ENCODE measurements at regions of chr11 and their contacts with region 1.

Region 1: GRCh38 chr11:94493281-94494125 is at the starts of genes ANKRD49 and MRE11:
- DNase-seq: peak; percentile 100
- H3K4me3 ChIP-seq: peak within 1 kb of the TSS; percentile 68 to 91 (median 85)
- H3K27ac ChIP-seq: peak within 1 kb of the TSS; percentile 56
- H3K4me1 ChIP-seq: peaks cover 16% of the 10 kb centered on the region
- H3K27me3 ChIP-seq: no peaks in the 10 kb centered on the region
- CTCF ChIP-seq: no peak
- POLR2A ChIP-seq: peak; percentile 62
- total RNA-seq, gene ANKRD49: 7.6 and 8.0 TPM in 2 replicates
- total RNA-seq, gene MRE11: 22.0 and 25.3 TPM in 2 replicates

Region 2: GRCh38 chr11:93197380-93198214 is 1295.9 kb before region 1 on chr11 and contains the start of gene SLC36A4:
- CTCF ChIA-PET with region 1: no interaction called
- POLR2A ChIA-PET with region 1: no interaction called
- dilution Hi-C with region 1: no loop called
- intact Hi-C with region 1: loop called (anchors 5 kb)
- DNase-seq: peak; percentile 96
- H3K4me3 ChIP-seq: peak within 1 kb of the TSS; percentile 70 to 95 (median 82)
- H3K27ac ChIP-seq: peak within 1 kb of the TSS; percentile 95
- H3K4me1 ChIP-seq: peaks cover 4% of the 10 kb centered on the region
- H3K27me3 ChIP-seq: peaks cover 6 to 8% of the 10 kb centered on the region in 2 experiments
- CTCF ChIP-seq: no peak
- POLR2A ChIP-seq: peak; percentile 84
- total RNA-seq, gene SLC36A4: 16.8 and 21.7 TPM in 2 replicates

Region 3: GRCh38 chr11:93791493-93791892 is 702.0 kb before region 1 on chr11:
- CTCF ChIA-PET with region 1: no interaction called
- POLR2A ChIA-PET with region 1: no interaction called
- dilution Hi-C with region 1: no loop called
- intact Hi-C with region 1: loop called (anchors 10 kb)
- DNase-seq: no peak
- H3K4me3 ChIP-seq: no peak overlapping the region
- H3K27ac ChIP-seq: no peak overlapping the region
- H3K4me1 ChIP-seq: peaks cover 5% of the 10 kb centered on the region
- H3K27me3 ChIP-seq: no peaks in the 10 kb centered on the region
- CTCF ChIP-seq: no peak
- POLR2A ChIP-seq: no peak